ENCODE measurements at regions of chr11 and their contacts with region 1.

Region 1: DNA sequence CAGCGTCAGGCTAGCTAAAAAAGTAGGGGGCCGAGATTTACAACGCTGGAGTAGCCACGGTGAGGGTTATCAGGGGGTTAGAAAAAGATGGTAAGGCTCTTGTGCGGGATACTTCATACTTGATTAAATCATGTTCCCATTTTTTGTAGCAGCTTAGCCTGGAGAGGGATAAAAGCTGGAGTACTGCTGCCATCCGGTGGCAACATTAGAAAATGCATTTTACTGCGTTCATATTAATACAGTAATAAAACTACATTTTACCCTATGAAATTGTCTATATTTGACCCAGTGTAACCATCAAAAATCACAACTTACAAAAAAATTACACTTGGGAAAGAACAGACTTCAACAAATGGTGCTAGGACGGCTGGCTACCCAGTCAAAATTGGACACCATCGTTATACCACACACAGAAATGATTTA is 17.3 kb downstream of the RPUSD4 start:
- DNase-seq: no peak
- ATAC-seq: peak; percentile 62 to 66
- H3K4me3 ChIP-seq: no peak overlapping the region
- H3K27ac ChIP-seq: no peak overlapping the region
- H3K4me1 ChIP-seq: peaks cover 2% of the 10 kb centered on the region
- H3K27me3 ChIP-seq: no peaks in the 10 kb centered on the region

Region 2: DNA sequence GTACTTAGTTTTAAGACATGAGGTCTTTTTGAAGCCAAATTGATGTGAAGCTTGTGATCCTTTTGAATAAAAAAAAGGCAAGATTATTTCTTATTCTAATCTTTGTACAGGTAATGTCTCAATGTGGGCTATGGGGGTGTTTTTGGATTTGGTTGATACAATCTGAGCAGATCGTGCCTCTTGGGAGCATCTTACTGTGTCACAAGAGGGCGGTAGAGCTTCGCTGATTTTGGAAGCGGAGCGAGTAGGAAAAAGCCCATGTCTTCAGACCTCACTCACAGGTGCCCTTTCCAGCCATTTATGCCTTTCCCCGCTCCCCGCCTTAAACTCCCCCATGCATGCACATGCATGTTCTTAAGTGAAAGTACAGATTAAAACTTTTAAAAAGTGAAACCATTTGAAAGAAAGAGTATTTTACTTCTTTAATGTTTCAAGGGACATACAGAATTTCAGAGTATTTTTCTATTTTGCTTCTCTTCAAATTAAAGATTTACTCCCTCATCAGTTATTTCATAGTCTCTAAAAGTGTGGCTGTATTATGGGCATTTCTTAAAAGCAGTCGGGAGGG is 271.0 kb before region 1 on chr11:
- intact Hi-C with region 1: loop called (anchors 1 to 5 kb)
- DNase-seq: peak; percentile 53 to 79 (median 67)
- ATAC-seq: peak; percentile 62 to 83
- H3K4me3 ChIP-seq: no peak overlapping the region
- H3K27ac ChIP-seq: no peak overlapping the region
- H3K4me1 ChIP-seq: no peaks in the 10 kb centered on the region
- H3K27me3 ChIP-seq: no peaks in the 10 kb centered on the region